AG04450 (cell line): ENCODE measurements at regions of chr12 and their contacts with region 1.

Region 1: DNA sequence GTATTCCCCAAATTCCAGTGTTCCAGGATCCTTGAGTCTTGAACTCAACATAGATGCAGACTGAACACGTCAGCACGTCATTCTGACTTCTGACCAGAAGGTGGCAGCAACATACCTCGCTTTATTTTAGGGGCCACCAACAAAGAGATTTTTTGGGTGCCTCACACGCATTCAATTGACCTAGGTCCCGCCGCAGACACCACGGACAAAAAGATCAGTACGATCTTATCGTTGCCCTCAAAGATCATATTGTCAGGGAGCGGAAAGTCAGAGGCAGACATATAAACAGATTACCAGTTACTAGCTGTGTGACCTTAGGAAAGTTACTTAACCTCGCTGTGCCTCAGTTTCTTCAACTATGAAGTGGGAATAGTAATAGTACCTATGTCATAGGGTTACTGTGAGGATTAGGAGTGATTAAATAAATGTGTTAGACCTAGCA is 6.5 kb upstream of the PRPH start:
- DNase-seq: no peak
- H3K4me3 ChIP-seq: no peak overlapping the region
- H3K27ac ChIP-seq: no peak overlapping the region
- H3K27me3 ChIP-seq: peaks cover 16% of the 10 kb centered on the region
- CTCF ChIP-seq: peak; percentile 79

Region 2: GRCh38 chr12:49342066-49342913 is 53.9 kb after region 1 on chr12:
- CTCF ChIA-PET with region 1: interaction called, 30 read pairs
- POLR2A ChIA-PET with region 1: no interaction called
- DNase-seq: peak; percentile 30
- H3K4me3 ChIP-seq: peak overlapping the region; percentile 49
- H3K27ac ChIP-seq: no peak overlapping the region
- H3K27me3 ChIP-seq: peaks cover 85% of the 10 kb centered on the region
- CTCF ChIP-seq: peak; percentile 70

Region 3: GRCh38 chr12:49347384-49348237 is 59.2 kb after region 1 on chr12:
- CTCF ChIA-PET with region 1: interaction called, 30 read pairs
- POLR2A ChIA-PET with region 1: no interaction called
- DNase-seq: peak; percentile 77
- H3K4me3 ChIP-seq: peak overlapping the region; percentile 66
- H3K27ac ChIP-seq: peak overlapping the region; percentile 39
- H3K27me3 ChIP-seq: peaks cover 44% of the 10 kb centered on the region
- CTCF ChIP-seq: peak; percentile 87

Region 4: DNA sequence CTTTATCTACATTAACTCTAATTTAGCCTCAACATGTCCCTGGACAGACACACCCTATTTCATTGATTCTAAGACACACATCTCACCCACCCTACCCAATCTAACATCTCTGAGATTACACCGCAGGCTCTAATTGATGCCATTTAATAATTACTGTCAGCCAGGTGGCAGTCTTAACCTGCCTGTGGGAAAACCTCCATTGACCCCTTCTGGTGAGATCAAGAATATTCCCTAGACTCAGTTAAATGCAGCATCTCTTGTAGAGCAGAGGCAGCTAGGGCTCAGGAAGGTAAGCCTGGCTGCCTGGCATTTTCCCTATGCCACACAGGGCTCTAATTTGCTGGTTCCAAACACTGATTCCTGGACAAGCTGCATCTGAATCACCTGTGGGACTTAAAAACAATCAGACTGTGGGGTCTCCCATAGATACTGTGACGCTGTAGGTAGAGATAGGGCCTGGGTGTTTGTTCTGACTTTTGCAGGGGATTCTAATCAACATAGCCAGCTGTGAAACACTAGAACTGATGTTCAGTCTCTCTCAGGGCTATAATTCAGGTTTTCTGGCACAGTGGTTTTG is 265.2 kb after region 1 on chr12:
- CTCF ChIA-PET with region 1: interaction called, 6 read pairs
- POLR2A ChIA-PET with region 1: interaction called, 12 read pairs
- DNase-seq: no peak
- H3K4me3 ChIP-seq: no peak overlapping the region
- H3K27ac ChIP-seq: no peak overlapping the region
- H3K27me3 ChIP-seq: peaks cover 23% of the 10 kb centered on the region
- CTCF ChIP-seq: peak; percentile 38

Region 5: DNA sequence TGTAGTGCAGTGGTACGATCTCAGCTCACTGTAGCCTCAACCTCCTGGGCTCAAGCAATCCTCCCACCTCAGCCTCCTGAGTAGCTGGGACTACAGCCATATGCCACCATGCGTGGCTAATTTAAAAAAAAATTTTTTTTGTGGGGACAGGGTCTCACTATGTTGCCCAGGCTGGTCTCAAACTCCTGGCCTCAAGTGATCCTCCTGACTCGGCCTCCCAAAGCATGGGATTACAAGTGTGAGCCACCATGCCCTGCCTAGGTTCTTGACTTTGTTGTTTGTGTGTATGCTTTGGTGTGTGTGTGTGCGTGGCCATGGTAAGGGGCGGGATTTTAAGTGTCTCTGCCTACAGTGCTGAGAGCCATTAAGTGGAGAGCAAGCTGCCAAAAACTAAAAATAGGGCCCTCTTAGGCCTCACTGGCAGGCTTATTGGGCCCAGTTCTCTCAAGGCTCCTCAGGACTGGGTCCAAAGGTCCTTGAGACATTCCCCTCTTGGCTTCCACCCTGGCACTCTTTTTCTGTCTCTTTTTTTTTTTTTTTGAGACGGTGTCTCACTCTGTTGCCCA is 828.7 kb after region 1 on chr12:
- CTCF ChIA-PET with region 1: no interaction called
- POLR2A ChIA-PET with region 1: no interaction called
- DNase-seq: no peak
- H3K4me3 ChIP-seq: no peak overlapping the region
- H3K27ac ChIP-seq: no peak overlapping the region
- H3K27me3 ChIP-seq: no peaks in the 10 kb centered on the region
- CTCF ChIP-seq: no peak